HCT116 (cell line): ENCODE measurements at regions of chr2 and their contacts with region 1.

Region 1: GRCh38 chr2:200703127-200703925 is 108.4 kb upstream of the BZW1 start:
- DNase-seq: peak; percentile 68
- ATAC-seq: peak; percentile 65
- H3K4me3 ChIP-seq: no peak overlapping the region
- H3K27ac ChIP-seq: no peak overlapping the region
- H3K4me1 ChIP-seq: no peaks in the 10 kb centered on the region
- H3K27me3 ChIP-seq: no peaks in the 10 kb centered on the region
- CTCF ChIP-seq: peak; percentile 34 to 94 (median 63); a peak in 5 of 6 replicates
- POLR2A ChIP-seq: no peak
- RAD21 ChIP-seq: peak; percentile 95

Region 2: DNA sequence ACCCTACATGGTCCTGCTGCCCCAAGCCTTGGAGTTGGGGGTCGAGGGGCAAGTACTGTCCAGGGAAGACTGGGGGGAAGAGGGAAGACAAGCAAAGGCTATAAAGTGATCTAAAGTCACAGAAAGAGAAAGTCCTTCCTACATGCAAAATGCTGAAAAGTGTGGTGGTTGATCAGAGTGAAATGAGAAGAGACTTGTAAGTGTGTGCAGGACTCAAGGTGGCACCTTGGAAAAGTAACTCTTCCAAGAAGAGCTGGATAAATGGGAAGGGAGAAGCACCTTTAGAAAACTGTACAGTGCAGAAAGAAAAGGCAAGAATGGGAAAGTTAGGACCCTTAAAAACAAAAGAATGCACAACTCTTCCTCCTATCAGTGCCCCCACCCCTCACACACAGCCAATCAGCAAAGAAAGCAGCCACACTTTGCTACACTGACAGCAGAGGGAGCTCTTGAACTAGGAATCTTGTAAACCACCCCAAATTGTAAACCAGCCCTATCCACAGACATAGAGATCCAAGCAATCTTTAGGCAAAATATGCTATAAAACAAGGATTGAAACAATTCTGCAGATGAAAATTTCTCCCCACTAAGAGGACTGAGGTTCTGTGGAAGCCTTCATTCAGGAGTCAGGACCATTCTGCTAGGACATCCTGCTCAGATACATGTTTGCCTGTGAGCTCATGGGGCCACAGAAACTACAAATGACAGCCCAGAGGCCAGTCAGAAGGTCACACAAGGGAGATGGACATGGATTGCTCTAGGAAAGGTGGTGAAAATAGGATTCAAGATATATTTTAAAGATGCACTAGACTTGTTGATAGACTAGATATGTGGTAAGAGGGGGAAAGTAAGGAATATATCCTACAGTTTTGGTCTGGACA is 998.7 kb before region 1 on chr2:
- CTCF ChIA-PET with region 1: no interaction called
- POLR2A ChIA-PET with region 1: no interaction called
- RAD21 ChIA-PET with region 1: no interaction called
- intact Hi-C with region 1: loop called (anchors 10 kb)
- DNase-seq: peak; percentile 36
- ATAC-seq: peak; percentile 98
- H3K4me3 ChIP-seq: no peak overlapping the region
- H3K27ac ChIP-seq: no peak overlapping the region
- H3K4me1 ChIP-seq: no peaks in the 10 kb centered on the region
- H3K27me3 ChIP-seq: 0 out of 2 replicates have a peak, but pooled peaks cover 3% of the 10 kb centered on the region
- CTCF ChIP-seq: peak; percentile 63 to 80 (median 74); a peak in 5 of 6 replicates
- POLR2A ChIP-seq: no peak
- RAD21 ChIP-seq: peak; percentile 85

Region 3: DNA sequence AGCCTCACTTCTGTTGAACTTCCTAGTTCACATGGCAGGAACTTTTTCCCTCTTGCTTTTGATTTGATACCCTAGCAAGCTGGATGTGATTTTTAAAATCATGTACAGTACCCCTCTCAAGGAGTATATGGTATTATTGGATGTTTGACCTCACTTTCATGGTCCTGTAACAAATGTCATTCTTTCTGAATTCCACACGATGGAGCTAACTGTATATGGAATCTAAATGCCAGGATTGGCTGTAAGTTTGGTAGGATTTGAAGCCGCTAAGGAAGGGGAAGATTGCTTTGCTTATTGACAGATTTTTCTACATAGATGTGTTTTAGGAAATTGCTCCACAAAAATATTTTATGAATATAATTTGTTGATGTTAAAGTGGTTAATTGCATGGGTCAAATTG is 729.6 kb before region 1 on chr2:
- CTCF ChIA-PET with region 1: interaction called, 13 read pairs
- POLR2A ChIA-PET with region 1: no interaction called
- RAD21 ChIA-PET with region 1: no interaction called
- intact Hi-C with region 1: loop called (anchors 2 kb)
- DNase-seq: peak; percentile 29
- ATAC-seq: peak; percentile 74
- H3K4me3 ChIP-seq: no peak overlapping the region
- H3K27ac ChIP-seq: no peak overlapping the region
- H3K4me1 ChIP-seq: peaks cover 10 to 16% of the 10 kb centered on the region in 2 experiments
- H3K27me3 ChIP-seq: no peaks in the 10 kb centered on the region
- CTCF ChIP-seq: peak; percentile 43 to 78 (median 62)
- POLR2A ChIP-seq: no peak
- RAD21 ChIP-seq: peak; percentile 89

Region 4: GRCh38 chr2:200483729-200484198 is 219.6 kb before region 1 on chr2:
- CTCF ChIA-PET with region 1: interaction called, 86 read pairs
- POLR2A ChIA-PET with region 1: interaction called, 6 read pairs
- RAD21 ChIA-PET with region 1: interaction called, 3 to 4 read pairs
- intact Hi-C with region 1: loop called (anchors 1 kb)
- DNase-seq: peak; percentile 27
- ATAC-seq: peak; percentile 80
- H3K4me3 ChIP-seq: no peak overlapping the region
- H3K27ac ChIP-seq: no peak overlapping the region
- H3K4me1 ChIP-seq: peaks cover 0 to 26% of the 10 kb centered on the region in 2 experiments; a peak in 2 of 4 replicates
- H3K27me3 ChIP-seq: no peaks in the 10 kb centered on the region
- CTCF ChIP-seq: peak; percentile 71 to 85 (median 80)
- POLR2A ChIP-seq: no peak
- RAD21 ChIP-seq: peak; percentile 83

Region 5: DNA sequence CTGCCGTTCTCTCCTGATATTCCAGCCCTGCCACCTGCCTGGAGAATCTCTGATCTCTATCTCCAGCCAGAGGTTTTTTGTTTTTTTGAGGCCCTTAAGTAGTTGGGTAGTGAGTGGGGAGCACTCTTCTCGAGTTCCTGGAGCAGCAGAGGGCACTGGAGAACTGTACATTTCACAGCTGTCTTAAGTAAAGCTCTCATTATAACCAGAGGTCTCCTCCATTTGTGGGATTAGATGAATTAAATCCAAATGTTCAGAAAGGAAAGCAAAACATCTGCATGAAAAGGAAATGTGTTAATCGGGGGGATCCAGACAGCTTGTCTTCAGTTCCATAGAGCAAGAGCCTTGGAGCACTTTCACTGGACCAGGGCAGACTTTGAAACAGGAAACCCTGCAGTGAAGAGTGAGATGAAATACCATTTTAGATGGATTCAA is 84.7 kb before region 1 on chr2:
- CTCF ChIA-PET with region 1: interaction called, 7 read pairs
- POLR2A ChIA-PET with region 1: no interaction called
- RAD21 ChIA-PET with region 1: no interaction called
- intact Hi-C with region 1: loop called (anchors 2 kb)
- DNase-seq: no peak
- ATAC-seq: no peak
- H3K4me3 ChIP-seq: no peak overlapping the region
- H3K27ac ChIP-seq: no peak overlapping the region
- H3K4me1 ChIP-seq: peaks cover 0 to 7% of the 10 kb centered on the region in 2 experiments; a peak in 2 of 4 replicates
- H3K27me3 ChIP-seq: no peaks in the 10 kb centered on the region
- CTCF ChIP-seq: peak in 2 of 3 experiments; percentile 10 to 29; a peak in 2 of 6 replicates
- POLR2A ChIP-seq: no peak
- RAD21 ChIP-seq: peak; percentile 66

Region 6: DNA sequence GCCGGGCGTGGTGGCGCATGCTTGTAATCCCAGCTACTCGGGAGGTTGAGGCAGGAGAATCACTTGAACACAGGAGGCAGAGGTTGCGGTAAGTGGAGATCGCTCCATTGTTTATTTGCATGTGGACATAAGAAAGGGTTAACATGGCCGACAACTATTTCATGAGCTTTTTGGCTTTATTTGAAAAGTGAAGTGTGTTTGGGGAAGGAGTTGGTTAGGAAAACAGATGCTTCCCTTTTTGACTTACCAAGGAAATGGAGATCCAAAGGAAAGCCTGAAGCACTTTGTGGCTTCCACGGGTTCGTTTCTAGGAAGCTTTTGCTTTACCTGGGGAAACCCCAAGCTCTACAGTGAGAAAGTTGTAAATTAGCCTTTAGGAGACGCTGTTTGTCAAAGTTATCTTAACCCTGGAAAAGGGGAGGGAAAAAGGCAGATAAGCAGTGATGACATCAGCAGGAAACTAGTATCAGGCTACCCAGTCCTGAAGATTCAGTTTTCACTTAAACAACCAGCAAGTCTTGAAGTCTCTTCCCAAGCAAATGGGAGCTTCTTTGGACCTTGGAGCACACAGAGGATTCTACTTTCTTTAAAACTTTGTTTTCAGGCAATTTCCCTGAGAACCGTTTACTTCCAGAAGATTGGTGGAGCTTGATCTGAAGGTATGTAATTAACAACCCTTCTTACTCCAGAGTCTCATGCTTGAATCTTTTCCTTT is 479.5 kb after region 1 on chr2 and contains the start of gene CASP10:
- CTCF ChIA-PET with region 1: interaction called, 10 read pairs
- POLR2A ChIA-PET with region 1: no interaction called
- RAD21 ChIA-PET with region 1: no interaction called
- intact Hi-C with region 1: no loop called
- DNase-seq: peak; percentile 53
- ATAC-seq: peak; percentile 85
- H3K4me3 ChIP-seq: peak within 1 kb of the TSS; percentile 16 to 39
- H3K27ac ChIP-seq: no peak within 1 kb of the TSS
- H3K4me1 ChIP-seq: peaks cover 0 to 13% of the 10 kb centered on the region in 2 experiments; a peak in 2 of 4 replicates
- H3K27me3 ChIP-seq: no peaks in the 10 kb centered on the region
- CTCF ChIP-seq: peak; percentile 28 to 63 (median 51); a peak in 4 of 6 replicates
- POLR2A ChIP-seq: peak; percentile 33
- RAD21 ChIP-seq: peak; percentile 82
- total RNA-seq, gene CASP10: 2.6 TPM